ENCODE measurements at regions of chr14 and their contacts with region 1.

Region 1: GRCh38 chr14:93115069-93115820 is 480 bp downstream of the ITPK1 start:
- DNase-seq: peak; percentile 87
- H3K4me3 Mint-ChIP-seq: peak overlapping the region; percentile 83
- H3K27ac Mint-ChIP-seq: no peak overlapping the region
- H3K4me1 Mint-ChIP-seq: peaks cover 24% of the 10 kb centered on the region
- H3K27me3 Mint-ChIP-seq: no peaks in the 10 kb centered on the region

Region 2: DNA sequence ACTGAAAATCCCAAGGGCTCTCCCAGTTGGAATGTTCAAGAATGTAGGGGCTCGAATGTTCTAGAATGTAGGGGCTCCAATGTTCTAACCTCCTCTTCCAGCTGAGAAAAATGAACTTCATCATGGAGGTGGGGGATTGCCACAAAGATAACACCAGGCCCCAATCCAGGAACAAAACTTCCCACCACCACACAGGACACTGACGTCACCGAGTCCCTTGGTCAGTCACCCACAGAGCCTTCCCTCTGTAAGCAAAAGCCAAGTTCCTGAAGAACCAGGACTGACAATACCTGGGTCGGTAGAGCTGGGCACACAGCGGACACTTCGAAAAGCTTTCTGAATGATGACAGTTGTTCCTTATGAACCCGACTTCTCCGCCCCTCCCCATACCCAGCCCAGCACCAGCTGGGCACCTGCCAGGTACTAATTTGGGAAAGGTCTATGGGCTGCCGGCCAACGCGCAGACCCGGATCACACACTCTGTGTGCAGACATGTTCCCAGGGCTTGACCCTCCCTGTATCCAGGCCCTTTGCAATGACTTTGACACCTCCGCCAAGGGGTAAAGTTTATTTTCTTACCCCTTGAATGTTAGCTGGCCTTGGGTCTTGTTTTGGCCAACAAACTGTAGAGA is 18.4 kb before region 1 on chr14:
- CTCF ChIA-PET with region 1: interaction called, 54 read pairs
- POLR2A ChIA-PET with region 1: no interaction called
- intact Hi-C with region 1: no loop called
- DNase-seq: no peak
- H3K4me3 Mint-ChIP-seq: no peak overlapping the region
- H3K27ac Mint-ChIP-seq: no peak overlapping the region
- H3K4me1 Mint-ChIP-seq: no peaks in the 10 kb centered on the region
- H3K27me3 Mint-ChIP-seq: no peaks in the 10 kb centered on the region

Region 3: GRCh38 chr14:93137864-93138263 is 22.6 kb after region 1 on chr14:
- CTCF ChIA-PET with region 1: interaction called, 152 read pairs
- POLR2A ChIA-PET with region 1: no interaction called
- intact Hi-C with region 1: loop called (anchors 1 kb)
- DNase-seq: no peak
- H3K4me3 Mint-ChIP-seq: no peak overlapping the region
- H3K27ac Mint-ChIP-seq: no peak overlapping the region
- H3K4me1 Mint-ChIP-seq: peaks cover 2% of the 10 kb centered on the region
- H3K27me3 Mint-ChIP-seq: no peaks in the 10 kb centered on the region

Region 4: DNA sequence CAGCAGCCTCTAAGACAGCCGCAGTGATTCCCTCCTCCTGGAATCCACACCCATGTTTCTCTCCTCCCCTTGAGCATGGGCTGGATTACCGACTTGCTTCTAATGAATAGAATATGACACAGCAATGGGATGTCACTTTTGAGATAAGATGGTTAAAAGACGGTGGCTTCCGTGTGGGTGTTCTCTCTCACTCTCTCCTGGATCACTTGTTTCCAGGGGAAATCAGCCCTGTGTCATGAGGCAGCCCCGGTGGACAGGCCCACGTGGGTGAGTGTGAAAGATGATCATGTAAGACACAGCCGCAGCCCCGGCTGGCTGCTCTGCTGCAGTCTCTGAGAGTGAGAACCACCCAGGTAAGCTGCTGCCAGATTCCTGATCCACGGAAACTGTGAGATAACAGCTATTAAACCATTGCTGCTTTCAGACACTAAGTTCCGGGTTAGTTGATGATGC is 58.7 kb after region 1 on chr14:
- CTCF ChIA-PET with region 1: interaction called, 38 read pairs
- POLR2A ChIA-PET with region 1: no interaction called
- intact Hi-C with region 1: no loop called
- DNase-seq: peak; percentile 43
- H3K4me3 Mint-ChIP-seq: no peak overlapping the region
- H3K27ac Mint-ChIP-seq: no peak overlapping the region
- H3K4me1 Mint-ChIP-seq: no peaks in the 10 kb centered on the region
- H3K27me3 Mint-ChIP-seq: no peaks in the 10 kb centered on the region

Region 5: GRCh38 chr14:93219103-93219726 is 104.0 kb after region 1 on chr14:
- CTCF ChIA-PET with region 1: interaction called, 9 read pairs
- POLR2A ChIA-PET with region 1: no interaction called
- intact Hi-C with region 1: loop called (anchors 1 kb)
- DNase-seq: peak; percentile 50
- H3K4me3 Mint-ChIP-seq: no peak overlapping the region
- H3K27ac Mint-ChIP-seq: no peak overlapping the region
- H3K4me1 Mint-ChIP-seq: no peaks in the 10 kb centered on the region
- H3K27me3 Mint-ChIP-seq: no peaks in the 10 kb centered on the region

Region 6: DNA sequence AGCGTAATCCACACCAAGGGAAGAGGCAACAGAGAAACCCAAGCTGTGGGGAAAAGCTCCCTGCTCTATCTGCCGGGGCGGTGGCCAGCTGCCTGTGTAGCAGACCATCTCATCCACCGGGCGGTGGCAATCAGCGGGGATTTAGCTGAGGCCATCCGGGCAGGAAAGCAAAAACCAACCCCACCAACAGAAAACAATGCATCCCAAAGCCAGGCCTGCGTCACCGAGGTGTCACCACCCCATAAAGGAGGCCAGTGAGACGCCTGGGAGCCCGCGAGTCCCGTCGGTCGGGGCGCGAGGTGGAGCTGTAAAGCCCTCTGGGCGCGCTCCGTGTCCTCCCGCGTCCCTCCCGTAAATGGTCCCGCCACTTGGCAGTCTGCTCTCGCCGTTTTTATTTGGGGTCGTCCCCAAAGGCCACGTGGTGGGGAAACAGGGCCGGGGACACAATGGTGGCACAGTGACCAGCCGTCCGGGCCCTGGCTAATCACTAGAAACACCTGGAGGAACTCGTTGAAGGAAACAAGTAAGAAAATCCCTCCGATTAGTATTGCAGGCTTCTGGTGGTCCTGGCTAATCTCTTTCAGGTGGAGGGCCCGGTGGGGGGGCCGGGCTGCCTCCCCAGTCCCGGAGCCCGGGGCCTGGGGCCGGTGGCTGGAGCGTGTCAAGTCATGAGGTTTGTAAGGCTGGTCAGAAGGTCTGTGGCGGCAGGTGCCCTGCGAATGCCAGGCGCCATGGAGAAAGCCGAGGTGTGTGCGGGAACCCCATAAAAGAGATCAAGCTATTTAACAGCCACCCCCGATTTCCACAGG is 1749.3 kb after region 1 on chr14:
- CTCF ChIA-PET with region 1: no interaction called
- POLR2A ChIA-PET with region 1: no interaction called
- intact Hi-C with region 1: no loop called
- DNase-seq: no peak
- H3K4me3 Mint-ChIP-seq: no peak overlapping the region
- H3K27ac Mint-ChIP-seq: no peak overlapping the region
- H3K4me1 Mint-ChIP-seq: no peaks in the 10 kb centered on the region
- H3K27me3 Mint-ChIP-seq: peaks cover 29% of the 10 kb centered on the region